Activated CD4-positive, alpha-beta T cell treated with anti-CD3 and anti-CD28 coated beads, Interleukin-2, amount 10 ng/mL, durations not matched to agents 7 days and 5 days (primary cell): ENCODE measurements at regions of chr6 and their contacts with region 1.

Region 1: GRCh38 chr6:43621429-43622180 is 7.5 kb downstream of the GTPBP2 start:
- DNase-seq: no peak
- H3K4me3 Mint-ChIP-seq: no peak overlapping the region
- H3K27ac Mint-ChIP-seq: peak overlapping the region; percentile 50
- H3K4me1 Mint-ChIP-seq: peaks cover 7% of the 10 kb centered on the region
- H3K27me3 Mint-ChIP-seq: no peaks in the 10 kb centered on the region

Region 2: GRCh38 chr6:43570876-43571441 is 50.6 kb before region 1 on chr6:
- CTCF ChIA-PET with region 1: interaction called, 10 read pairs
- POLR2A ChIA-PET with region 1: no interaction called
- DNase-seq: no peak
- H3K4me3 Mint-ChIP-seq: no peak overlapping the region
- H3K27ac Mint-ChIP-seq: peak overlapping the region; percentile 70
- H3K4me1 Mint-ChIP-seq: peaks cover 35% of the 10 kb centered on the region
- H3K27me3 Mint-ChIP-seq: no peaks in the 10 kb centered on the region

Region 3: DNA sequence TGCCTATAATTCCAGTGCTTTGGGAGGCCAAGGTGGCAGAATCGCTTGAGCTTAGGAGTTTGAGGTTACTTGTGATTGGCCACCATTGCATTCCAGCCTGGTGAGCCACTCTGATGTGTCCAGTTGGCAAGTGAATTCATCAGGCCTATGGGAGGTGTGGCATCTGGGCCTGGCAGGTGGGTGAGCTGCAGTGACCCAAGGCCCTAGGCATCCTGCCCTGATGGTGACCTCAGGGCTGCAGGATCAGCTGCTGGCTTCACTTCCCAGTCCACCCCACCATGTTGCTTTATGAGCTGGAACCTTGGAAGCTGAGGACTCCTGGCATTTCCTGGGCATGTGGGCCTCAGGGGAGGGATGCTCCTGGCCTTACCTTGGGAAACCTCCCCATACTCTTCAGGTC is 43.8 kb after region 1 on chr6:
- CTCF ChIA-PET with region 1: no interaction called
- POLR2A ChIA-PET with region 1: no interaction called
- DNase-seq: no peak
- H3K4me3 Mint-ChIP-seq: no peak overlapping the region
- H3K27ac Mint-ChIP-seq: no peak overlapping the region
- H3K4me1 Mint-ChIP-seq: peaks cover 47% of the 10 kb centered on the region
- H3K27me3 Mint-ChIP-seq: no peaks in the 10 kb centered on the region